ENCODE measurements at regions of chr2 and their contacts with region 1.

Region 1: GRCh38 chr2:112958428-112959108 is 19.2 kb upstream of the IL36G start:
- DNase-seq: peak; percentile 21
- ATAC-seq: peak; percentile 83
- H3K4me3 Mint-ChIP-seq: no peak overlapping the region
- H3K27ac Mint-ChIP-seq: no peak overlapping the region
- H3K4me1 Mint-ChIP-seq: peaks cover 8% of the 10 kb centered on the region; the same call in 1 of the 2 replicates
- H3K27me3 Mint-ChIP-seq: peaks cover 8% of the 10 kb centered on the region
- CTCF ChIP-seq: peak; percentile 73

Region 2: GRCh38 chr2:112933261-112933951 is 25.2 kb before region 1 on chr2:
- CTCF ChIA-PET with region 1: interaction called, 11 read pairs
- POLR2A ChIA-PET with region 1: no interaction called
- DNase-seq: no peak
- ATAC-seq: no peak
- H3K4me3 Mint-ChIP-seq: no peak overlapping the region
- H3K27ac Mint-ChIP-seq: no peak overlapping the region
- H3K4me1 Mint-ChIP-seq: no peaks in the 10 kb centered on the region
- H3K27me3 Mint-ChIP-seq: peaks cover 28% of the 10 kb centered on the region
- CTCF ChIP-seq: no peak

Region 3: DNA sequence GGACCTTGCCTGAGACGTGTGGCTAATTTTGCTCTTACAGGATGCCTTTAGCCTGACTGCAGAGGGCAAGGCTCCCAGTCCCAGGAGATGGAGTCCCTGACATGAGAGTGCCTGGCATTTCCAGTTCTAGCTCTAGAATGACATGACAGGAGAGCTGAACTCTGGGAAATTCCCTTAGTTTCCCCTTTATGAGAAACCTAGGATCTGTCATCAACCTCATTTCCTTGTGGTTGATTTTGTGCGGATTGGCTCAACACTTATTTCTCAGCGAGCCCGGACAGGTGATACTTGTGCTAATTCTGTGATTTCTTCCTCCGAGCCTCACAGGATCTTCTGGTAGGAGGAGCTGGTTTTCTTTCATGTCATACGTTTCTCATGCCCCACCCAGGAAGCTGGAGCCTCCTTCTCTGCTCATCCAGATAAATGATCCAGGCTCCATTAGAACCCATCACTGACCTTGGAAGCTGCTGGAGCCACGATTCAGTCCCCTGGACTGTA is 19.0 kb after region 1 on chr2 and contains the start of gene IL36G:
- CTCF ChIA-PET with region 1: interaction called, 12 read pairs
- POLR2A ChIA-PET with region 1: no interaction called
- DNase-seq: no peak
- ATAC-seq: no peak
- H3K4me3 Mint-ChIP-seq: no peak within 1 kb of the TSS
- H3K27ac Mint-ChIP-seq: no peak within 1 kb of the TSS
- H3K4me1 Mint-ChIP-seq: no peaks in the 10 kb centered on the region
- H3K27me3 Mint-ChIP-seq: peaks cover 46% of the 10 kb centered on the region
- CTCF ChIP-seq: no peak
- total RNA-seq, gene IL36G: 0.32 TPM in 1 of 3 replicates, not detected in the others